CD4-positive, alpha-beta memory T cell (primary cell): ENCODE measurements at regions of chr6 and their contacts with region 1.

Region 1: DNA sequence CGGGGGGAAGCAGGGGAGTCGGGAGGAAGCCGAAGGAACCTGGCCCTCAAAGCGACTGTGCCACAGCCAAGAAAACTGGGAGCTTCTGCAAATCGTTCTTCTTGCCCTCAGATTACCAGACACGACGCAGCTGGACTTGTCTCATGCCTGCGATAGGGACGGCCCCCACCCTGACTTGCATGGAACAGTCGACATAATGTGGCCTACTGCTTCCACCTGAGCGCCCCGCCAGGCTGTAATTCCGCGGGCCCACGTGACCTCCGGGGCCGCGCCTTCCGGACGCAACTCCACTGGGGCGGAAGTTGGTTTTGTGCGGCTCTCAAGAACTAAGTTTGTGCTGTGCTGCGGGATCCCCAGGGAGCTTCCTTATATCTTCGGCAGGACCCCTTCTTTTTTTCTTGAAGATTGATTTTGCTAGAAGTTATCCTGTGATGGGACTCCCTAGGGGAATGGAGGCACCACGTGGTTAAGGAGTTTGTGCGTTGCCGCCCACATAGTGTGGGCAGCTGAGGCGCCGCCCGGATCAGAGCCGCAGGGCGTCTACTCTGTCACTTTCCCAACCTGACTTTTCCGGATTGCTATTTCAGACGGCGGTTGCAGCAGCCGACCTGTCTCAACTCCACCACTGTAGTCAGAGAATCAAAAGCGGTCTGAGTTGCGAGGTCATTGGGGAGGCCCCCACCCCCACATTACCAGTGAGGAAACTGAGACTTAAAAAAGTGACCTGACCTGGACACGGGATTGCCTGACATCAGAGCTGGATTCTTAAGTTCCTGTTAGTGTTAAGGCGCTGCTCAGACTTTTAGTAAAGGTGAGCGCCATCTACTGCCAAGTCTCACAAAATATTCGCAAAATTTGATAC is 540 bp upstream of the CD164 start:
- DNase-seq: peak; percentile 95 to 97 (median 96)
- H3K4me3 ChIP-seq: peak overlapping the region; percentile 77 to 96
- H3K4me3 Mint-ChIP-seq: peak overlapping the region; percentile 89 to 98 (median 98)
- H3K27ac ChIP-seq: peak overlapping the region; percentile 97
- H3K27ac Mint-ChIP-seq: peak overlapping the region; percentile 99 to 100 (median 99)
- H3K4me1 ChIP-seq: peaks cover 37% of the 10 kb centered on the region
- H3K4me1 Mint-ChIP-seq: peaks cover 27 to 54% (median 39%) of the 10 kb centered on the region in 4 donors
- H3K27me3 ChIP-seq: no peaks in the 10 kb centered on the region
- H3K27me3 Mint-ChIP-seq: no peaks in the 10 kb centered on the region

Region 2: GRCh38 chr6:108260809-108261569 is 1121.8 kb before region 1 on chr6 and contains the start of gene SNX3:
- CTCF ChIA-PET with region 1: no interaction called
- POLR2A ChIA-PET with region 1: interaction called, 17 read pairs
- intact Hi-C with region 1: loop called (anchors 2 kb)
- DNase-seq: peak; percentile 90 to 94 (median 91)
- H3K4me3 ChIP-seq: peak within 1 kb of the TSS; percentile 93 to 98
- H3K4me3 Mint-ChIP-seq: peak within 1 kb of the TSS; percentile 86 to 97 (median 92)
- H3K27ac ChIP-seq: peak within 1 kb of the TSS; percentile 84
- H3K27ac Mint-ChIP-seq: peak within 1 kb of the TSS; percentile 89 to 97 (median 95)
- H3K4me1 ChIP-seq: peaks cover 43% of the 10 kb centered on the region
- H3K4me1 Mint-ChIP-seq: peaks cover 15 to 38% (median 27%) of the 10 kb centered on the region in 4 donors
- H3K27me3 ChIP-seq: no peaks in the 10 kb centered on the region
- H3K27me3 Mint-ChIP-seq: peaks cover 0 to 2% of the 10 kb centered on the region in 2 donors
- total RNA-seq, gene SNX3: 65.9 to 66.6 TPM

Region 3: GRCh38 chr6:108848116-108848868 is 534.5 kb before region 1 on chr6 and contains the start of gene ARMC2:
- CTCF ChIA-PET with region 1: no interaction called
- POLR2A ChIA-PET with region 1: no interaction called
- intact Hi-C with region 1: loop called (anchors 1 kb)
- DNase-seq: peak; percentile 85 to 88 (median 86)
- H3K4me3 ChIP-seq: peak within 1 kb of the TSS; percentile 46 to 78
- H3K4me3 Mint-ChIP-seq: peak within 1 kb of the TSS; percentile 84 to 91 (median 86)
- H3K27ac ChIP-seq: peak within 1 kb of the TSS; percentile 58
- H3K27ac Mint-ChIP-seq: peak within 1 kb of the TSS; percentile 81 to 93 (median 91)
- H3K4me1 ChIP-seq: peaks cover 15% of the 10 kb centered on the region
- H3K4me1 Mint-ChIP-seq: peaks cover 17 to 33% (median 23%) of the 10 kb centered on the region in 4 donors
- H3K27me3 ChIP-seq: no peaks in the 10 kb centered on the region
- H3K27me3 Mint-ChIP-seq: no peaks in the 10 kb centered on the region
- total RNA-seq, gene ARMC2: 10.7 to 11.2 TPM

Region 4: DNA sequence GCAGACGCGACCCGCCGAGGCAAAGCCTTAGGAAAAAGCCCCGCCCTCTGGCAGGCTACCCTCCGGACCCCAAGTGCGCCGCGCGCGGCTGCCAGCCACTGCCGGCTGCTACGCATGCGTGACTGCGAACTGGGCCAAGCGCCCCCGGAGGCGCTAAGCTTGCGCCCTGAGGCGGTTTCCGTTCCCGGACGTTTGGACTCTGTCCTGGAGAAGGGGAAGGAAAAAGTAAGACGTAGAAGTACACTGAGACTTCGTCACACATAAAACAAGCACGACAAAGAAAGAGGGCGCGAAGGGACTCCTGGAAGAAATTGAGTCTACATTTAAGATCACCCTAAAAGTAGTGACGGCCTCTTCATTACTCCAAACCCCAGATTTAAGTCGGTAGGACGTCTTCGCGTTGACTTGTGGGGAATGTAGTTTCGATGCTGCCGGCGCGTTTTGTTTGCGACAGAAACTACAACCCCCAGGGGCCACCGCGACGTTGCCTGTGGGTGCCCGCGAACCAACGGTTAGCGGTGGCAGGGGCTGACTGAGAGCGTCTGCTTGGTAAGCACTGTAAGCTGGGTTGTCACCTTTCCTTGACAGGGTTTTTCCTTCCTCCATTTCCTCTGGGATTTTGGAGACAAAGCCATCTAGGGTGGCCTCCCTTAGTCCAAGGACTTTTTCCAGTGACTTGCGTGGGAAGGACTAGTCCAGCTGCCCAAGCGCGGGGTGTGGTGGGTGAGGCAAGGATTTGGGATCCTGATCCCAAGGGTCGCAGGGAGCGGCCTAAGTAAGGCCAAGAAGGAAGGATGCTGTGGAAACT is 287.6 kb before region 1 on chr6 and contains the start of gene CEP57L1:
- CTCF ChIA-PET with region 1: interaction called, 3 read pairs
- POLR2A ChIA-PET with region 1: interaction called, 51 read pairs
- intact Hi-C with region 1: loop called (anchors 1 kb)
- DNase-seq: peak; percentile 94 to 97 (median 95)
- H3K4me3 ChIP-seq: peak within 1 kb of the TSS; percentile 74 to 80
- H3K4me3 Mint-ChIP-seq: peak within 1 kb of the TSS; percentile 90 to 97 (median 95)
- H3K27ac ChIP-seq: peak within 1 kb of the TSS; percentile 97
- H3K27ac Mint-ChIP-seq: peak within 1 kb of the TSS; percentile 97 to 100 (median 99)
- H3K4me1 ChIP-seq: peaks cover 44% of the 10 kb centered on the region
- H3K4me1 Mint-ChIP-seq: peaks cover 36 to 60% (median 44%) of the 10 kb centered on the region in 4 donors
- H3K27me3 ChIP-seq: no peaks in the 10 kb centered on the region
- H3K27me3 Mint-ChIP-seq: no peaks in the 10 kb centered on the region
- total RNA-seq, gene CEP57L1: 5.7 to 9.2 TPM

Region 5: GRCh38 chr6:109455502-109456282 is 72.9 kb after region 1 on chr6 and contains the start of gene MICAL1:
- CTCF ChIA-PET with region 1: interaction called, 11 read pairs
- POLR2A ChIA-PET with region 1: interaction called, 148 read pairs
- intact Hi-C with region 1: loop called (anchors 1 kb)
- DNase-seq: peak; percentile 78 to 90 (median 81)
- H3K4me3 ChIP-seq: peak within 1 kb of the TSS; percentile 76 to 91
- H3K4me3 Mint-ChIP-seq: peak within 1 kb of the TSS; percentile 87 to 99 (median 98)
- H3K27ac ChIP-seq: peak within 1 kb of the TSS; percentile 94
- H3K27ac Mint-ChIP-seq: peak within 1 kb of the TSS; percentile 95 to 100 (median 99)
- H3K4me1 ChIP-seq: peaks cover 75% of the 10 kb centered on the region
- H3K4me1 Mint-ChIP-seq: peaks cover 39 to 76% (median 59%) of the 10 kb centered on the region in 4 donors
- H3K27me3 ChIP-seq: no peaks in the 10 kb centered on the region
- H3K27me3 Mint-ChIP-seq: no peaks in the 10 kb centered on the region
- total RNA-seq, gene MICAL1: 76.5 to 79.3 TPM

Region 6: DNA sequence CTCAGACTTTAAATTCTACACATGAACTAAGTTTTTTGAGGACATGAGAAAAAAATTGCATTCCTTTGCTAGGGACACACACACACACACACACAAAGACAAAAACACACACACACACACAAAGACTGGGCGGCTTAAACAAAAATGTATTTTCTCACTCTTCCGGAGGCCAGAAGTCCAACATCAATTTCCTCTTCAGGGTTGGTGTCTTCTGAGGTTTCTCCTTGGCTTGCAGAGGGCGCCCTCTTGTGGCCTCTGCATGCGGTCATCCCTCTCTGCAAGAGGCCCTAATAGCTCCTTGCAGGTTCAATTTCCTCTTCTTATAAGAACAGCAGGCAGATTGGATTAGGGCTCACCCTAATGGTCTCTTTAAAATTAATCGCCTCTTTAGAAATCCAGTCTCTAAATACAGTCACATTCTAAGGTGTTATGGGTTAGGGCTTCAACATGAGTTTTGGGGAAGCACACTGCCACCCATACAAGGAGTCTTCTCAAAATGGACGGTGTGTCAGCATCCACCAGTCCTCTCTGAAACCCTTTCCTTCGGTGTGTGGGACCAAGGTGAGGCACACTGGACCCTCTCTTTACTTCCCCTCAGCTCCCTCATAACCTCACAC is 656.7 kb after region 1 on chr6:
- CTCF ChIA-PET with region 1: interaction called, 26 read pairs
- POLR2A ChIA-PET with region 1: interaction called, 8 read pairs
- intact Hi-C with region 1: loop called (anchors 1 kb)
- DNase-seq: peak; percentile 73 to 77 (median 75)
- H3K4me3 ChIP-seq: peak overlapping the region; percentile 49 to 57
- H3K4me3 Mint-ChIP-seq: peak overlapping the region; percentile 88 to 96 (median 94)
- H3K27ac ChIP-seq: peak overlapping the region; percentile 34
- H3K27ac Mint-ChIP-seq: peak overlapping the region; percentile 59 to 94 (median 88)
- H3K4me1 ChIP-seq: peaks cover 11% of the 10 kb centered on the region
- H3K4me1 Mint-ChIP-seq: peaks cover 11 to 15% (median 13%) of the 10 kb centered on the region in 4 donors
- H3K27me3 ChIP-seq: no peaks in the 10 kb centered on the region
- H3K27me3 Mint-ChIP-seq: no peaks in the 10 kb centered on the region